PC-3 (cell line): ENCODE measurements at regions of chr6 and their contacts with region 1.

Region 1: GRCh38 chr6:55868771-55869479 is 6.5 kb downstream of the BMP5 start:
- DNase-seq: peak; percentile 98
- ATAC-seq: peak; percentile 93
- H3K4me3 ChIP-seq: peak overlapping the region; percentile 30; the same call in 1 of the 2 replicates
- H3K27ac ChIP-seq: peak overlapping the region; percentile 97
- H3K4me1 ChIP-seq: peaks cover 60% of the 10 kb centered on the region
- H3K27me3 ChIP-seq: no peaks in the 10 kb centered on the region
- CTCF ChIP-seq: no peak

Region 2: GRCh38 chr6:55758156-55758888 is 110.6 kb before region 1 on chr6:
- CTCF ChIA-PET with region 1: no interaction called
- POLR2A ChIA-PET with region 1: interaction called, 5 read pairs
- intact Hi-C with region 1: loop called (anchors 1 kb)
- DNase-seq: peak; percentile 97
- ATAC-seq: peak; percentile 99
- H3K4me3 ChIP-seq: no peak overlapping the region
- H3K27ac ChIP-seq: peak overlapping the region; percentile 85
- H3K4me1 ChIP-seq: peaks cover 37% of the 10 kb centered on the region
- H3K27me3 ChIP-seq: no peaks in the 10 kb centered on the region
- CTCF ChIP-seq: no peak

Region 3: GRCh38 chr6:55794136-55794812 is 74.7 kb before region 1 on chr6:
- CTCF ChIA-PET with region 1: no interaction called
- POLR2A ChIA-PET with region 1: no interaction called
- intact Hi-C with region 1: loop called (anchors 1 kb)
- DNase-seq: peak; percentile 78
- ATAC-seq: peak; percentile 72
- H3K4me3 ChIP-seq: no peak overlapping the region
- H3K27ac ChIP-seq: peak overlapping the region; percentile 65
- H3K4me1 ChIP-seq: peaks cover 27% of the 10 kb centered on the region
- H3K27me3 ChIP-seq: no peaks in the 10 kb centered on the region
- CTCF ChIP-seq: no peak

Region 4: GRCh38 chr6:55825402-55826051 is 43.4 kb before region 1 on chr6:
- CTCF ChIA-PET with region 1: no interaction called
- POLR2A ChIA-PET with region 1: no interaction called
- intact Hi-C with region 1: loop called (anchors 1 kb)
- DNase-seq: peak; percentile 77
- ATAC-seq: peak; percentile 89
- H3K4me3 ChIP-seq: no peak overlapping the region
- H3K27ac ChIP-seq: peak overlapping the region; percentile 37
- H3K4me1 ChIP-seq: peaks cover 24% of the 10 kb centered on the region
- H3K27me3 ChIP-seq: no peaks in the 10 kb centered on the region
- CTCF ChIP-seq: no peak

Region 5: GRCh38 chr6:55853008-55854001 is 15.6 kb before region 1 on chr6:
- CTCF ChIA-PET with region 1: no interaction called
- POLR2A ChIA-PET with region 1: no interaction called
- intact Hi-C with region 1: no loop called
- DNase-seq: peak; percentile 45
- ATAC-seq: peak; percentile 88
- H3K4me3 ChIP-seq: peak overlapping the region; percentile 42; the same call in 1 of the 2 replicates
- H3K27ac ChIP-seq: peak overlapping the region; percentile 40
- H3K4me1 ChIP-seq: peaks cover 12% of the 10 kb centered on the region
- H3K27me3 ChIP-seq: no peaks in the 10 kb centered on the region
- CTCF ChIP-seq: no peak